Left cardiac atrium (tissue), 4 donors: ENCODE measurements at regions of chr11 and their contacts with region 1.

Region 1: DNA sequence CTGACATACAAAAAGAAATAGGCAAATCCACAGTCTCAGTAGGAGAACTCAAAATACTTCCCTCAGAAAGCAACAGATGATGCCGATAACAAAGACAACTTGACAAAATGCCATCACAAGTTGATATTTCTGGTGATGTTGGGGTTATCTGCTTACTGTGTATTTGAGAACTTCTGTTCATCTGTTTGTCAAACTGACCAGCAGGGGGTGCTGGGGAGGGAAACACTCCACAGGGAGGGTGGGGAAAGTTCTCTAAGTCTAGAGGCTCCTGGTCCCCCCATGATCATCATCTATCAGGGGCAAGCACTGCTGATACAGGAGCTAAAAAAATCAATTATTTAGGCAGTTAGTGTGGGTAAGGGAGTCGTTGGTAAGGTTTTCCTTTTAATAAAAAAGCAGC is 19.2 kb downstream of the GLYATL1 start:
- DNase-seq: peak; percentile 24
- ATAC-seq: no peak

Region 2: DNA sequence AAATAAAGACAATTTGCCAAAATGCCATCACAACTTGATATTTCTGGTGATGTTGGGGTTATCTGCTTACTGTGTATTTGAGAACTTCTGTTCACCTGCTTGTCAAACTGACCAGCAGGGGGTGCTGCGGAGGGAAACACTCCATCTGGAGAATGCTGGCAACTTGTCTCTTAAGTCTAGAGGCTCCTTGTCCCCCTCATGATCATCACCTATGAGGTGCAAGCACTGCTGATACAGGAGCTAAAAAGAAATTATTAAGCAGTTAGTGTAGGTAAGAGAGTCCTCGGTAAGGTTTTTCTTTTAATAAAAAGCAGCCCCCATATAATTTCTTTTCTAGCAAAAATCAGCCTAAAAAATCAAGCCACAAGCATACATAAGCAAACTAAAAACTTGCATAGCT is 94.9 kb after region 1 on chr11:
- intact Hi-C with region 1: loop called in 1 of 2 experiments (anchors 5 kb)
- DNase-seq: peak; percentile 58
- ATAC-seq: peak in 1 of 2 donors; percentile 25